CD4-positive, alpha-beta T cell (primary cell): ENCODE measurements at regions of chr1 and their contacts with region 1.

Region 1: GRCh38 chr1:42035830-42036604 is 117.2 kb upstream of the GUCA2B start:
- DNase-seq: peak; percentile 94 to 99 (median 97)
- ATAC-seq: peak; percentile 91
- H3K4me3 ChIP-seq: peak overlapping the region; percentile 70
- H3K4me3 Mint-ChIP-seq: peak overlapping the region; percentile 81
- H3K27ac ChIP-seq: peak overlapping the region in 1 of 2 donors; percentile 14
- H3K27ac Mint-ChIP-seq: peak overlapping the region; percentile 74
- H3K4me1 ChIP-seq: peaks cover 40% of the 10 kb centered on the region
- H3K4me1 Mint-ChIP-seq: peaks cover 42% of the 10 kb centered on the region
- H3K27me3 ChIP-seq: no peaks in the 10 kb centered on the region
- H3K27me3 Mint-ChIP-seq: no peaks in the 10 kb centered on the region
- CTCF ChIP-seq: no peak

Region 2: GRCh38 chr1:41573785-41574713 is 462.0 kb before region 1 on chr1:
- CTCF ChIA-PET with region 1: interaction called, 5 read pairs
- POLR2A ChIA-PET with region 1: no interaction called
- intact Hi-C with region 1: loop called in 1 of 2 experiments (anchors 10 kb)
- DNase-seq: peak; percentile 65 to 90 (median 76)
- ATAC-seq: peak; percentile 96
- H3K4me3 ChIP-seq: no peak overlapping the region
- H3K4me3 Mint-ChIP-seq: no peak overlapping the region
- H3K27ac ChIP-seq: no peak overlapping the region
- H3K27ac Mint-ChIP-seq: no peak overlapping the region
- H3K4me1 ChIP-seq: peaks cover 9% of the 10 kb centered on the region
- H3K4me1 Mint-ChIP-seq: peaks cover 12% of the 10 kb centered on the region
- H3K27me3 ChIP-seq: no peaks in the 10 kb centered on the region
- H3K27me3 Mint-ChIP-seq: no peaks in the 10 kb centered on the region
- CTCF ChIP-seq: peak; percentile 78

Region 3: DNA sequence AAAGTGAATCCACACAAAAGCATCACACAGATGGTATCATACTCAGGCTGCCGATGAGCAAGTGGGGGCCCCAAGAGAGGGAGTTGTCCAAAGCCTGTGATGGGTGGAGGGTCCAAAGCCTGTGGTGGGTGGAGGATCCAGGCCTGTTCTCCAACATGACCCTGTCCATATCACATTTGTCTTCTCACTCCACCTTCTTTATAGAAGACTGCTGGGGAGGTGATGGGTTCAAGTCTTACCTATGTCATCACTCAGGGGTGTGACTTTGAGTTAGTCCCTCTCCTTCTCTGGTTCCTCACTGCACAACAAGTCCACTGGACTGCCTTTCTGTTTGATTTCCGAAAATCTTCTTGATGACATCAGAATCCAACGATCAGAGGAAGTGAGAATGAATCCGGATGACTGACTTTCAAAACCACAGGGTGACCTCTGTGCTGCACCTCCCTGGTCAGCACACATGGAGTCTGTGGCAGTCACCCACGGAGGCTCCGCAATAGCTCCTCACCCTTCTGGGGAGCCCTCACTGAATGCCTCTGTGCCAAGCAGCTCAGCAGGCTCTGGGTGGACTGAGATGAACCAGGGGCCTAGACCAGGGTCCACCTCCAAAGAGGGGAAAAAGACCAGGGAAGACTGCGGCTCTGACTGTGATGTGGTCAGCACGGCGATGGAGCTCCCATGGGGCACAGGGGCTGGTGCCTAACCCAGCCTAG is 284.1 kb before region 1 on chr1:
- CTCF ChIA-PET with region 1: no interaction called
- POLR2A ChIA-PET with region 1: no interaction called
- intact Hi-C with region 1: loop called in 1 of 2 experiments (anchors 10 kb)
- DNase-seq: peak in 3 of 14 experiments; percentile 33 to 70 (median 61)
- ATAC-seq: no peak
- H3K4me3 ChIP-seq: no peak overlapping the region
- H3K4me3 Mint-ChIP-seq: no peak overlapping the region
- H3K27ac ChIP-seq: no peak overlapping the region
- H3K27ac Mint-ChIP-seq: no peak overlapping the region
- H3K4me1 ChIP-seq: peaks cover 46% of the 10 kb centered on the region
- H3K4me1 Mint-ChIP-seq: peaks cover 46% of the 10 kb centered on the region
- H3K27me3 ChIP-seq: no peaks in the 10 kb centered on the region
- H3K27me3 Mint-ChIP-seq: no peaks in the 10 kb centered on the region
- CTCF ChIP-seq: no peak

Region 4: DNA sequence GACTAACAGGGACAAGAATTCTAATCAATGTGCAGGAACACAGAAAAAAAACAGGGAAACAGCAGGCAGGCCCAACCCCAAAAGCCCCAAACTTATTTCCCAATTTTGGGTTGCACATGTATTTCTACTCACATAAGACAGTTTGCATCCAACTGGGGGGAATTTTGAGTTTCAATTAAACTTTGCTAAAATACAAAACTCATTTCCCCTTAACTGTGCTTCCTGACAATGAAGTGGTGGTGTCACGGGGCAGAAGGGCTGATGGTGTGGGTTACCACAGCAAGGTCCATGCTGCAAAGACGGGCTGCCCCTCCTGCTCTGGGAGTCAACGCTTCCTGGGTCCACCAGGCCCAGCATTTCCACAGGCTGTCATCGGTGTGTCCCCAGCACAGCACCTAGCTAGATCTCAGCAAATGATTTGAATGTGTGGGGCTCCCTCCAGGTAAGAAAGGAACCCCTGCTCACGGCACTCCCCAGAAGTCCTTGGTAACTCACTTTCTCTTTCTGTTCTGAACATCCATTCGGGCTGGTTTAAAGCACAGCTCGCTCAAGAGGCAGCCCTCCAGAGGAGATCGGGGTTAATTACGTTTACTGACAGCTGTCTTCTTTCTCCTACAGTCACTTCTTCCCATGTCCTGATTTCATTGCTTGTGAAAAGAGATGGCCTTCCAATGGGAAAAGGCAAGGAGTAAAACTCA is 144.7 kb before region 1 on chr1:
- CTCF ChIA-PET with region 1: interaction called, 4 read pairs
- POLR2A ChIA-PET with region 1: interaction called, 15 read pairs
- intact Hi-C with region 1: loop called (anchors 2 to 5 kb)
- DNase-seq: peak; percentile 37 to 87 (median 54)
- ATAC-seq: peak; percentile 99
- H3K4me3 ChIP-seq: peak overlapping the region; percentile 55
- H3K4me3 Mint-ChIP-seq: peak overlapping the region; percentile 77
- H3K27ac ChIP-seq: peak overlapping the region; percentile 57 to 77
- H3K27ac Mint-ChIP-seq: peak overlapping the region; percentile 90
- H3K4me1 ChIP-seq: peaks cover 68% of the 10 kb centered on the region
- H3K4me1 Mint-ChIP-seq: peaks cover 61% of the 10 kb centered on the region
- H3K27me3 ChIP-seq: no peaks in the 10 kb centered on the region
- H3K27me3 Mint-ChIP-seq: no peaks in the 10 kb centered on the region
- CTCF ChIP-seq: peak; percentile 61

Region 5: DNA sequence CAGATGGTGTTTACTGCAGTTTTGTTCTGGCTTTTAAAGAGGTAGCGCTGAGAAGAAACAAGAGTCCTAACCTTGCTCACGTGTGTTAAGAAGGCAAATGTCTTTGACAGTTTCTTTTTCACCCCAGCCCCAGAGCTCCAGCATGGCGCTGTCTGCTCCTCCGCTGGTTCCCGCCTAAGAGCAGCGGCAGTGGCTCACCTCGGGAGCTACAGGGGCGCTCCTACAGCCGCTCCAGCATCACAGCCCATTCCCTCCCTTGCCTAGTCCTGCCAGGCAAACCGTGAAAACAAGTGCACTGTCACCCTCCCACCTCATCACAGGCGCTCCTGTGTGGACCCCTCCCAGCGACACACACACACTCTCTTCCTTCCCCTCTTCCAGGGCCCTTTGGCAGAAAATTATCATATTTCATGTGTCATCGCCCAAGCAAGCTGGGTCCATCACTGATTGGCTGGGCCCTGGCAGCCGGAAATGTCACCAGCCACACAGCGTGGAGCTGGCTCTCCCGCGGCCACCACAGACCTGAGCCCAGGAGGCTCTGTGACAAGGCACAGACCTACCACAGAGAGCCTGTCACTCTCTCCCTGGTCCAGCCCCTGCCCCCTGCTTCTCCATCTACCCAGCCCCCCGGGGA is 116.1 kb before region 1 on chr1:
- CTCF ChIA-PET with region 1: no interaction called
- POLR2A ChIA-PET with region 1: interaction called, 7 read pairs
- intact Hi-C with region 1: loop called in 1 of 2 experiments (anchors 2 kb)
- DNase-seq: peak; percentile 56 to 94 (median 72)
- ATAC-seq: peak; percentile 83
- H3K4me3 ChIP-seq: peak overlapping the region; percentile 62
- H3K4me3 Mint-ChIP-seq: peak overlapping the region; percentile 84
- H3K27ac ChIP-seq: peak overlapping the region; percentile 57 to 60
- H3K27ac Mint-ChIP-seq: peak overlapping the region; percentile 95
- H3K4me1 ChIP-seq: peaks cover 51% of the 10 kb centered on the region
- H3K4me1 Mint-ChIP-seq: peaks cover 63% of the 10 kb centered on the region
- H3K27me3 ChIP-seq: no peaks in the 10 kb centered on the region
- H3K27me3 Mint-ChIP-seq: no peaks in the 10 kb centered on the region
- CTCF ChIP-seq: no peak

Region 6: GRCh38 chr1:42462828-42463763 is 427.1 kb after region 1 on chr1 and contains the start of gene CCDC30:
- CTCF ChIA-PET with region 1: no interaction called
- POLR2A ChIA-PET with region 1: no interaction called
- intact Hi-C with region 1: loop called in 1 of 2 experiments (anchors 5 kb)
- DNase-seq: peak; percentile 91 to 99 (median 95)
- ATAC-seq: peak; percentile 97
- H3K4me3 ChIP-seq: peak within 1 kb of the TSS; percentile 69
- H3K4me3 Mint-ChIP-seq: peak within 1 kb of the TSS; percentile 87
- H3K27ac ChIP-seq: peak within 1 kb of the TSS; percentile 49 to 86
- H3K27ac Mint-ChIP-seq: peak within 1 kb of the TSS; percentile 86
- H3K4me1 ChIP-seq: peaks cover 15% of the 10 kb centered on the region
- H3K4me1 Mint-ChIP-seq: peaks cover 52% of the 10 kb centered on the region
- H3K27me3 ChIP-seq: no peaks in the 10 kb centered on the region
- H3K27me3 Mint-ChIP-seq: peaks cover 4% of the 10 kb centered on the region
- CTCF ChIP-seq: no peak
- total RNA-seq, gene CCDC30: 1.2 to 1.3 TPM